PC-9 (cell line): ENCODE measurements at regions of chr16 and their contacts with region 1.

Region 1: DNA sequence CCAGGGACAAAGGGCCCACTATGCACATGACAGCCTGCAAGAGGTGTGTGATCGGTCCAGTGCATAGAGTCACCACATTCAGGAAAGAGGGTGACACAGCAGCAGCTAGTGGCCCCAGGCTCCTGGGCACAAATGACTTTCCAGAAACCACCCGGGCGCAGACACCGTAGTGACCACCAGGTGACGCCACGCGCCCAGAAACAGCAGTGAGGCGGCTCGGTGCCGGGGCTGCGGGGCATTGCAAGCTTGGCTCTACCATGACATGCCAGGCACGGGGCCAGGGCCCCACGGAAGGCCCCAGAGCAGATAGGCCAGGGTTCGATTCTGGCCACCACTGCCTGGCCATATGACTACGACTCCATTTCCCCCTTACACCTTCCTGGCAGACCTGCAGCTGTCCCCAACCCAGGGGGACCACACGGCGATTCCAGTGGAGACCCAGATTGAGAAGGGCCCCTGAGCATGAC is 6.7 kb downstream of the RHBDF1 start:
- DNase-seq: peak; percentile 52 to 89
- H3K4me3 ChIP-seq: no peak overlapping the region
- H3K27ac ChIP-seq: no peak overlapping the region
- H3K4me1 ChIP-seq: peaks cover 10% of the 10 kb centered on the region
- H3K27me3 ChIP-seq: no peaks in the 10 kb centered on the region
- CTCF ChIP-seq: peak; percentile 92

Region 2: GRCh38 chr16:96935-97381 is 31.3 kb after region 1 on chr16:
- CTCF ChIA-PET with region 1: interaction called, 14 read pairs
- POLR2A ChIA-PET with region 1: no interaction called
- intact Hi-C with region 1: loop called (anchors 1 kb)
- DNase-seq: peak; percentile 72 to 91
- H3K4me3 ChIP-seq: no peak overlapping the region
- H3K27ac ChIP-seq: no peak overlapping the region
- H3K4me1 ChIP-seq: no peaks in the 10 kb centered on the region
- H3K27me3 ChIP-seq: no peaks in the 10 kb centered on the region
- CTCF ChIP-seq: peak; percentile 93

Region 3: GRCh38 chr16:129075-129474 is 63.4 kb after region 1 on chr16:
- CTCF ChIA-PET with region 1: no interaction called
- POLR2A ChIA-PET with region 1: no interaction called
- intact Hi-C with region 1: no loop called
- DNase-seq: no peak
- H3K4me3 ChIP-seq: no peak overlapping the region
- H3K27ac ChIP-seq: no peak overlapping the region
- H3K4me1 ChIP-seq: no peaks in the 10 kb centered on the region
- H3K27me3 ChIP-seq: no peaks in the 10 kb centered on the region
- CTCF ChIP-seq: no peak

Region 4: GRCh38 chr16:450385-451134 is 384.9 kb after region 1 on chr16:
- CTCF ChIA-PET with region 1: interaction called, 13 read pairs
- POLR2A ChIA-PET with region 1: no interaction called
- intact Hi-C with region 1: no loop called
- DNase-seq: peak in 1 of 2 experiments; percentile 42
- H3K4me3 ChIP-seq: no peak overlapping the region
- H3K27ac ChIP-seq: no peak overlapping the region
- H3K4me1 ChIP-seq: no peaks in the 10 kb centered on the region
- H3K27me3 ChIP-seq: no peaks in the 10 kb centered on the region
- CTCF ChIP-seq: no peak